ENCODE measurements at regions of chr2 and their contacts with region 1.

Region 1: DNA sequence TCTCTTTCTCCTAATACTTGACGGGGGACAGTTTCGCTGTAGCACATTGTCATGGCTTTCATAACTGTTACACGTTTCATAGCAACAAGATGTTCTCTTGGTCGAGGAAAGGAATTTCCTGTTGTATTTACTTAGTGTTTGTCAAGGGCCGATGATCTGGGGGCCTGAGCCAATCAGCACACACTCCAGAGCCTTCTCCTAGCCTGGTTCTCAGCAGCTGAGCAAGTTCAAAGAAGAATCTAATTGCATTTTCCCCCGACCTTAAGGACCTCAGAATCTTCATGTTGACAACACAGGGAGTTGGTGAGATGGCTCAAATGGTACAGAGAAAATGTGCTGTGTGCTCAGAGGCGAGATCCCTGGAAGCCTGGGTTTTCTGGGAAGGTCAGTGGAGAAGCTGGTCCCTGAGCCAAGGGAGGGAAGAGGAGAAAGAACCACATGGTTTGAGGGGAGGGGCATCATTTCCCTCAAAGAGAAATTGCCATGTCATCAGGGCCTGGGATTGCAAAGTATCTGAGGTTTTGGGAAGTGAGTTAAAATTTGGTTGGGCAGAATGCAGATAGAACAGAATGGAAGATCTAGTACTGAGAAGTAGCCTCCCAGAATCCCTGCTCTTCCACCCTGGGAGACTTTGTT is 76.9 kb upstream of the AGAP1 start:
- DNase-seq: peak; percentile 15
- H3K4me3 ChIP-seq: no peak overlapping the region
- H3K27ac ChIP-seq: no peak overlapping the region
- H3K4me1 ChIP-seq: peaks cover 6% of the 10 kb centered on the region
- H3K27me3 ChIP-seq: no peaks in the 10 kb centered on the region
- CTCF ChIP-seq: no peak

Region 2: DNA sequence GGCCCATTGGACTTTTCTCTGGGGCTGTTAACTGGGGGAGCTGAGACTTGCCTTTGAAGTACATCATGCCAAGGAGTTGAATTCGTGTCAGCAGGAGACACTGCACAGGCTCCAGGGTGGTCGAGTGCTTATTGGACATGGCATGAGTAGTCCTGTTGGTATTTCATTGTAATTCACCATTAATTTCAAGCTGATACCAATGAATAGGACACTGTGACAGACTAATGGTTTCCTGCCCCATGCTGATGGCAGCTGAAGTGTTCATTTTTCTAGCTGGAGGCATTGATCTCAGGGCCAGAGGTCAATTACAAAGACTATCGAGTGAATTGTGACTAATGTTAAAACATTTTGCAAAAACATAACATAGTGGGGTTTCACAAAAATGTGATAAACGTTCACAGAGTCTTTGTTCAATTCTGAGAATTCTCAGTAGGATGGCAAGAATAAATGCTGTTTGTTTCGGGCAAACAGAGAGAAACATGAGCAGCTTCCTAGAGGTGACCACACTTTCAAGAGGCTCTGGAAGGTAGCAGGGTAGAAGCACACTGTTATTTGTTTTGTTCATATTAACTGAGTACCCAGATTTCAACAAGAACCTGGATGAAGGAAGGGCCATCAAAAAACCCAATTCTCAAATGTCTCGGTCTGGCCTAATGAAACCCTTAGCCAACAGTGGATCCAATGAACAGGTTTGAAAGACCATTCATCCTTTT is 829.5 kb before region 1 on chr2:
- CTCF ChIA-PET with region 1: no interaction called
- POLR2A ChIA-PET with region 1: no interaction called
- intact Hi-C with region 1: no loop called
- DNase-seq: peak; percentile 77
- H3K4me3 ChIP-seq: no peak overlapping the region
- H3K27ac ChIP-seq: no peak overlapping the region
- H3K4me1 ChIP-seq: no peaks in the 10 kb centered on the region
- H3K27me3 ChIP-seq: no peaks in the 10 kb centered on the region
- CTCF ChIP-seq: no peak

Region 3: DNA sequence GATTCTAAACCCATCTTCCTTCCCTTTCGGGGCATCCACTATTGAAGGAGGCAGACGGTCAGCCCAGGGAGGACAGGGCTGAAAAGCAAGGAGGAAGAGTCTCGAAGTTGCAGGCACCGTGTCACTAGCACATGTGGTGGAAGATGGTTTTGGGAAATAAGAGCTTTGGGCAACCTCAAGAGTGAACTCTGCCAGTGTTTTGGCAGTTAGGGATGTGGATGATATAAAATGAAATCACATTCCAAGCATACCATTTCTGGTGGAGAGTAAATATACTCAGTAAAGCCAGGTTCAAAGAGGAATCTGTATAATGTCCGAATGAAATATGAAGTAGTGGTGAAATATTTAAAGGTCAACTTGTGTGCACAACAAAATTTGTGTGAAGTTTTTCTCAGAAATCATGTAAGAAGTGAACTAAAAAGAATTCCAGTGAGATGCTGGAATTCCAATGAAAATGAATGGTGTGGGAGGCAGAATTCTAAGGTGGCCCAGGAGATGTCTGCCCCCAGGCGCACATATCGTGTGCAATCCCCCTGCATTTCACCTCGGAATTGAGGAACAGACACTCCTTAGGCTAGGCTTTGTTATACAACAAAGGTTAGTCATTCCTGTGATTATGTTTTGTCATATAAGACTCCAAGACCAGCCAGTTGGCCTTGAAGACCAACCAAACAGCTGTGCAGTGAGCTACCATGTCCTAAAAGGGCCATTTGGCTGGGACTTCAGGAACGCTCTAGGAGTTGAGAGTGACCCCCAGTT is 318.1 kb before region 1 on chr2:
- CTCF ChIA-PET with region 1: no interaction called
- POLR2A ChIA-PET with region 1: no interaction called
- intact Hi-C with region 1: no loop called
- DNase-seq: no peak
- H3K4me3 ChIP-seq: no peak overlapping the region
- H3K27ac ChIP-seq: no peak overlapping the region
- H3K4me1 ChIP-seq: no peaks in the 10 kb centered on the region
- H3K27me3 ChIP-seq: no peaks in the 10 kb centered on the region
- CTCF ChIP-seq: no peak

Region 4: GRCh38 chr2:235406430-235406829 is 10.6 kb before region 1 on chr2:
- CTCF ChIA-PET with region 1: interaction called, 10 read pairs
- POLR2A ChIA-PET with region 1: interaction called, 4 read pairs
- intact Hi-C with region 1: no loop called
- DNase-seq: peak; percentile 27
- H3K4me3 ChIP-seq: no peak overlapping the region
- H3K27ac ChIP-seq: no peak overlapping the region
- H3K4me1 ChIP-seq: peaks cover 5% of the 10 kb centered on the region
- H3K27me3 ChIP-seq: no peaks in the 10 kb centered on the region
- CTCF ChIP-seq: no peak

Measured in A673 (cell line).